Common myeloid progenitor, CD34-positive (primary cell): ENCODE measurements at regions of chr2 and their contacts with region 1.

Region 1: GRCh38 chr2:9738535-9739496 is 104.5 kb upstream of the TAF1B start:
- DNase-seq: peak in 2 of 3 donors; percentile 35 to 49
- H3K4me3 ChIP-seq: peak overlapping the region in 3 of 7 experiments; percentile 41 to 61 (median 51)
- H3K27ac ChIP-seq: no peak overlapping the region
- H3K4me1 ChIP-seq: peaks cover 0 to 28% (median 17%) of the 10 kb centered on the region in 4 experiments
- H3K27me3 ChIP-seq: no peaks in the 10 kb centered on the region

Region 2: DNA sequence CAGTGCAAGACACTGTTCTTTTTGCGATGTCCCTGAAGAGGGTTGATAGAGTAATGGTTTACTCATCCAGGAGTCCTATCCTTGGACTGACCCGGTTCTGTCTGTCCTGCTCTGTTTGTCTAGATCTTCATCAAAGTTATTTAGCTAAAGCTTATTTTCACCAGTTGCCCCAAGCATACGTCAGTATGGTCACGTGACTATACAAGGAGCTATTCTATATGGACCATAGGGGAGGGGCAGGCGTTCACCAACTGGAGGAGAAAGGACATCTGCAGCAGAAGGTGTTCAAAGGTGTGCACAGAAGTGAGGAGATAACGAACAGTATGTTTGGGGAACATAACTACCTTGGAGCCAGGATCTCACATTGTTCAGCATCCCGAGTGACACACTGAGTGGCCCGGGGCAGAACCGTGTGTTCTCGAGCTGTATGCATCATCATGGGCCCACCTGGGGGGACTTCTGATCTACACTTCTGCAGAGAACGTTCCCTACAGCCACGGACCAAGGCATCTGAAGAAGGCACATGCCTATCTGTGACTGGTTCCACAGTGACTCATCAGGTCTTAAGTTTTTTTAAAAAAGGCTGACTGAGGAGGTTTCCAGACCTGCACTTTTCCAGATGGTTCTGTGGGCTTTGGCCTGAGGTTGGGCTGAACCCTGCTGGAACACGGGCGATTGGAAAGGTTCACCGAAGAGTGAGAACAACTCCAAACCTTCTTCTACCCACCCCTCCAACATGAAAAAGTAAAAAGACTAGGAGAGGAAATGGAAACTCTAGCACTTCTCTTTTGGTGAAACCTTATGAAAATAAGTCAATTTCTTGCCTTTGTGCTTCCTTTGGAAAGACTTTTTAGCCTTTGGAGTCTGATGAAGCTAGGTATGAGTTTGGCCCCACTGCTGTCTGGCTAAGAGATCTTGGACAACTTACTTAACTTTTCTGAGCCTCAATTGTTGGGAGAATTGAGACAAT is 39.4 kb before region 1 on chr2:
- CTCF ChIA-PET with region 1: no interaction called
- POLR2A ChIA-PET with region 1: no interaction called
- DNase-seq: peak in 2 of 3 donors; percentile 59 to 73
- H3K4me3 ChIP-seq: no peak overlapping the region
- H3K27ac ChIP-seq: no peak overlapping the region
- H3K4me1 ChIP-seq: peaks cover 0 to 25% (median 15%) of the 10 kb centered on the region in 4 experiments
- H3K27me3 ChIP-seq: no peaks in the 10 kb centered on the region

Region 3: GRCh38 chr2:9753276-9753600 is 14.4 kb after region 1 on chr2:
- CTCF ChIA-PET with region 1: interaction called, 10 read pairs
- POLR2A ChIA-PET with region 1: no interaction called
- DNase-seq: peak in 2 of 3 donors; percentile 51 to 76
- H3K4me3 ChIP-seq: peak overlapping the region in 1 of 7 experiments; percentile 10
- H3K27ac ChIP-seq: no peak overlapping the region
- H3K4me1 ChIP-seq: peaks cover 0 to 53% (median 51%) of the 10 kb centered on the region in 4 experiments
- H3K27me3 ChIP-seq: no peaks in the 10 kb centered on the region